ENCODE measurements at regions of chr7 and their contacts with region 1.

Region 1: DNA sequence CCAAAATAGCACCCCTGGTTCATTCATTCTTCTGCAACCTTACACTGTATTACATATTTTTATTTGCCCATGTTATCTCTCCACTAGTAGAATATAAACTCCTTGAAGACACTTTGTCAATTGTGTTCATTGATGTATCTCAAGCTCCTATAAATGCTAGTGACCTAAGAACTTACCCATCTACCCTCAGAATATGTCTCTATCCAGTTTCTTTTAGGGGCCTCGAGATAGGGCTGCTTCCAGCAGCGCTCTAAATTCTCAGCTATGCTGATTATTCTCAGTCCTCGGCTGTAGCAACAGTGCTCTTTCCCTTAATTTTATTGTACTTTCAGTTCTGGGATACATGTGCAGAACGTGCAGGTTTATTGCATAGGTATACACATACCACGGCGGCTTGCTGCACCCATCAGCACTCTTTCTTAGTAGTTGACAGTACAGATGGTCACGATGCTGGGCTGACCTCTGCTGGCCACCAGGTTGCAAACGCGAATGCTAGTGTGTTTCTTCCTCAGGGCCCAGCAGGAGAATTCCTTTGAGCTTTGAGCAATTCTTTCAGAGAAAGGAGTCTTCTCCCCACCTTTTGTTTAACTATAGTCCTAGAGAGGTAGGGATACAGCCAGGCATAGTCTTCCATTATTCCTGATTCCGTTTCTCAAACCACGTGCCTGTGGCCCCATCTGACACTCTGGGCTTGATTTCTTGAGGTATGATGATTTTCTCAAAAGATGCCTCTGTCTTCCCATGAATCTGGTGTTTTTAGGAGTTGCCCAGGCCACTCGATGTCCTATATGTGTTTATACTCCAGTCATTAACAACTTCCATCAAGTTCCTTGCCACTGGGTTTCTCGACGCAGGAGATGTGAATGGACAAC is 49.1 kb upstream of the CDC14C start:
- DNase-seq: peak in 1 of 2 experiments; percentile 30
- H3K4me3 ChIP-seq: no peak overlapping the region
- H3K27ac ChIP-seq: no peak overlapping the region
- H3K4me1 ChIP-seq: no peaks in the 10 kb centered on the region
- H3K27me3 ChIP-seq: no peaks in the 10 kb centered on the region
- CTCF ChIP-seq: peak; percentile 64

Region 2: GRCh38 chr7:48337012-48337621 is 538.2 kb before region 1 on chr7:
- CTCF ChIA-PET with region 1: no interaction called
- POLR2A ChIA-PET with region 1: no interaction called
- intact Hi-C with region 1: loop called (anchors 10 kb)
- DNase-seq: peak in 1 of 2 experiments; percentile 18
- H3K4me3 ChIP-seq: no peak overlapping the region
- H3K27ac ChIP-seq: no peak overlapping the region
- H3K4me1 ChIP-seq: no peaks in the 10 kb centered on the region
- H3K27me3 ChIP-seq: peaks cover 32% of the 10 kb centered on the region
- CTCF ChIP-seq: peak; percentile 63

Region 3: GRCh38 chr7:48458701-48459524 is 416.4 kb before region 1 on chr7:
- CTCF ChIA-PET with region 1: no interaction called
- POLR2A ChIA-PET with region 1: no interaction called
- intact Hi-C with region 1: no loop called
- DNase-seq: peak in 1 of 2 experiments; percentile 69
- H3K4me3 ChIP-seq: no peak overlapping the region
- H3K27ac ChIP-seq: no peak overlapping the region
- H3K4me1 ChIP-seq: no peaks in the 10 kb centered on the region
- H3K27me3 ChIP-seq: peaks cover 48% of the 10 kb centered on the region
- CTCF ChIP-seq: no peak

Measured in PC-9 (cell line).